Activated CD8-positive, alpha-beta memory T cell treated with anti-CD3 and anti-CD28 coated beads, Interleukin-2, amount 10 ng/mL, durations not matched to agents 7 days and 5 days (primary cell): ENCODE measurements at regions of chr12 and their contacts with region 1.

Region 1: GRCh38 chr12:112978163-112979040 is at the start of gene OAS2:
- DNase-seq: peak; percentile 96
- ATAC-seq: peak; percentile 92
- H3K4me3 Mint-ChIP-seq: peak within 1 kb of the TSS; percentile 89
- H3K27ac Mint-ChIP-seq: peak within 1 kb of the TSS; percentile 100
- H3K4me1 Mint-ChIP-seq: peaks cover 52% of the 10 kb centered on the region
- H3K27me3 Mint-ChIP-seq: no peaks in the 10 kb centered on the region
- total RNA-seq, gene OAS2: 276 to 383 TPM

Region 2: DNA sequence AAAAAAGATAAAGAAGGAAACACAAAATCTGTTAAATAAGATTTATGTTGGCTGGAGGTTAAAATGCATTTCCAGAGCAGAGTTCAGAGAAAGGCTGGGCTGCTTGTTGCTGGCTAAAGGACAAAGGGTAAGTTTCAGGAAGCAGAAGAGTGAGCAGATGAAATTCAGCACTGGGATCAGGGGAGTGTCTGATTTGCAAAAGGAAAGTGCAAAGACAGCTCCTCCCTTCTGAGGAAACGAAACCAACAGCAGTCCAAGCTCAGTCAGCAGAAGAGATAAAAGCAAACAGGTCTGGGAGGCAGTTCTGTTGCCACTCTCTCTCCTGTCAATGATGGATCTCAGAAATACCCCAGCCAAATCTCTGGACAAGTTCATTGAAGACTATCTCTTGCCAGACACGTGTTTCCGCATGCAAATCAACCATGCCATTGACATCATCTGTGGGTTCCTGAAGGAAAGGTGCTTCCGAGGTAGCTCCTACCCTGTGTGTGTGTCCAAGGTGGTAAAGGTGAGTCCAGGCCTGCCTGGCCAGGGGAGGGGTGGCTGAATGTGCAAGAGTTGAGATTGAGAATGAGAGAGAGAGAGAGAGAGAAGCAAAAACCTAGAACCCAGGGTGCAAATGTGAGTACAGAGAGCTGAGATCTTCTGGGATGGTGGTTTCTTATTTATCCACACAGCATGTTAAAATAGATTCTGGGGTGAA is 71.5 kb before region 1 on chr12 and contains the start of gene OAS1:
- CTCF ChIA-PET with region 1: interaction called, 18 read pairs
- DNase-seq: peak; percentile 79
- ATAC-seq: peak; percentile 92
- H3K4me3 Mint-ChIP-seq: peak within 1 kb of the TSS; percentile 97
- H3K27ac Mint-ChIP-seq: peak within 1 kb of the TSS; percentile 97
- H3K4me1 Mint-ChIP-seq: peaks cover 72% of the 10 kb centered on the region
- H3K27me3 Mint-ChIP-seq: no peaks in the 10 kb centered on the region
- total RNA-seq, gene OAS1: 161 to 292 TPM